Calu3 (cell line): ENCODE measurements at regions of chr4 and their contacts with region 1.

Region 1: DNA sequence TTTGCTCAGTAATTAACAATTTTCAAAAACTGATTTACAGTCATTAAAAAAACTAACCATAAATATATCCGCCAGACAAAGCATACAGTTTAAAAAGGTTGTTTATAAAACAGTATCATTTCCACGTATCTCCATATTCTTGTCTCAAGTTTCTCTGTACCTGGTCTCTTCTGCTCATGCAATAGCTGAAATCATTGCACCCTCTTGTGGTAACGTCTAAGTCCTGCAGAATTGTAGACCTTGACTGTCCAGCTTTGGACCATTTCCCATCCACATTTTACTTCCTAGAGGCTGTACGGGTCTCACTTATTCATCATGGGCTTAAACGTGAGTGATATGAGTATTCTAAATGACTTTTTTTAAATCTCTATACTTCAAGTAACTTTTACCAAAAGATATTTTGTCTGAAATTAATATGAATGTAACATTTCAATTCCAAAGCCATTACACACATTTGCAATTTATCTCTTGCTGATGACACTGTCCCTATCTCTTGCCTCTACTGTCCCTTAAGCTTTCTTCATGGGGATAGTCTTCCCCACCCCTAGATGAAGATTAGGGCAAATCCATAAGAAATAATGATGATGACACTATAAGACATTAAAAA is 118.5 kb downstream of the BTC start:
- DNase-seq: peak; percentile 47
- H3K4me3 Mint-ChIP-seq: no peak overlapping the region
- H3K27ac Mint-ChIP-seq: peak overlapping the region; percentile 29
- H3K4me1 Mint-ChIP-seq: peaks cover 43% of the 10 kb centered on the region
- H3K27me3 Mint-ChIP-seq: no peaks in the 10 kb centered on the region
- CTCF ChIP-seq: peak; percentile 51

Region 2: DNA sequence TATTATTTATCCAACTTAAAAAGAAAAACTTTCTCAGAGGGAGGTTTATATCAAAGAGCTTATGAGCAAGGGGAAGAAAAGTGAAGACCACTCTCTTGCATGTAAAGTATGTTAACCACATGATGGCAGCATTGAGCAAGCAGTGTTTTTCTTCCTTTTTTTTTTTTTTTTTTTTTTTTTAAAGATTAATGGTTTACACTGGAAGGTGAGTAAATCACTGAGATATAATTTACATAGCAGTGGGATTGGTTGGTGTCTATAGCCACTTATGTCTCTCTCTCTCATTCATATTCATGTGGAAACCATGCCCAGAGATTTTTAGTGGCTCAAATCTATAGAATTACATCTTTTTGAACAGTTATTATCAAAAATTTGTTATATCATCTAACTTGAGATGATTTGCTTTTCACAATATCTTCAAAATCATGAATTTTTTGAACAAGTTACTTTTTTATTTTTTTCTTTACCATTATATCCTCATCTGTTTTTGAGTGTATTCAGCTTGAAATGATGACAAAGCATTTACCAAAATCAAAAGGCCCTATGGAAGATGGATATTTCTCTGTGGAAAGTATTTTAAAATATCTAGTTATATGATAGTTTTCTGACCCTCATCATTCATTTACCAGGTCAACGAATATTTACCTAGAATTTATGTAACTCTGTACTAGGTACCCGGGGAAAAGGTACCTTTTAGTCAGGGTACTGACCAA is 486.3 kb before region 1 on chr4:
- CTCF ChIA-PET with region 1: no interaction called
- intact Hi-C with region 1: loop called (anchors 1 kb)
- DNase-seq: no peak
- H3K4me3 Mint-ChIP-seq: no peak overlapping the region
- H3K27ac Mint-ChIP-seq: no peak overlapping the region
- H3K4me1 Mint-ChIP-seq: no peaks in the 10 kb centered on the region
- H3K27me3 Mint-ChIP-seq: no peaks in the 10 kb centered on the region
- CTCF ChIP-seq: peak; percentile 48

Region 3: DNA sequence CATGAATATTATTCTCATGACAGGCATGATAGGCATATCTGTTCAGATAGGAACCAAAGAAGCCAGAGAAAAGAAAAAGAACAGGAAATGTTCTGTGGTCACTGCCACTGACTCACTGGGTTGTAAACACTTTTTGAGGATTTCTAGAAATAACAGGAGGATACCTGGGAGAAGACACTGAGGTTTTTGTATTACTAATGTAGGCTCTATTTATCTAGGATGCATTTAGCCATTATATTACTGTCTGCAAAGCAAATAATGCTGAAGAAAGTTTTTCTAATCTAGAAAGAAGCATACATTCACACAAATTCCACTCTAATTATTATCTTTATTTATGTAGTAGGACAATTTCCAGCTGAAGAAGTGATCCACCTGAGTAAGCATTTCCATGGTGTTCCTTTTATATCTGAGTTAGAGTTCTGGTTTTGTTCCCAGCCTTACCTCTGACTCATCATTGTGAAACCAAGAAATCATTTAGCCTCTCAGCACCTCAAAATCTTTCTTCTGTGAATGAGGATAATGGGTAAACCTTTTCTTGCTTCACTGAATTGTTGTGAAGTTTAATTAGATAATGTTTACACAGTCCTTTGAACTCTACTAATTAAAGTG is 407.7 kb before region 1 on chr4:
- CTCF ChIA-PET with region 1: no interaction called
- intact Hi-C with region 1: no loop called
- DNase-seq: no peak
- H3K4me3 Mint-ChIP-seq: no peak overlapping the region
- H3K27ac Mint-ChIP-seq: no peak overlapping the region
- H3K4me1 Mint-ChIP-seq: no peaks in the 10 kb centered on the region
- H3K27me3 Mint-ChIP-seq: no peaks in the 10 kb centered on the region
- CTCF ChIP-seq: no peak

Region 4: GRCh38 chr4:74376888-74377483 is 298.8 kb before region 1 on chr4:
- CTCF ChIA-PET with region 1: no interaction called
- intact Hi-C with region 1: loop called (anchors 5 kb)
- DNase-seq: no peak
- H3K4me3 Mint-ChIP-seq: peak overlapping the region; percentile 77
- H3K27ac Mint-ChIP-seq: peak overlapping the region; percentile 95
- H3K4me1 Mint-ChIP-seq: peaks cover 10% of the 10 kb centered on the region
- H3K27me3 Mint-ChIP-seq: no peaks in the 10 kb centered on the region
- CTCF ChIP-seq: no peak

Region 5: GRCh38 chr4:74451200-74451661 is 224.5 kb before region 1 on chr4:
- CTCF ChIA-PET with region 1: interaction called, 12 read pairs
- intact Hi-C with region 1: loop called (anchors 2 kb)
- DNase-seq: peak; percentile 44
- H3K4me3 Mint-ChIP-seq: peak overlapping the region; percentile 64
- H3K27ac Mint-ChIP-seq: peak overlapping the region; percentile 74
- H3K4me1 Mint-ChIP-seq: peaks cover 32% of the 10 kb centered on the region
- H3K27me3 Mint-ChIP-seq: no peaks in the 10 kb centered on the region
- CTCF ChIP-seq: no peak

Region 6: DNA sequence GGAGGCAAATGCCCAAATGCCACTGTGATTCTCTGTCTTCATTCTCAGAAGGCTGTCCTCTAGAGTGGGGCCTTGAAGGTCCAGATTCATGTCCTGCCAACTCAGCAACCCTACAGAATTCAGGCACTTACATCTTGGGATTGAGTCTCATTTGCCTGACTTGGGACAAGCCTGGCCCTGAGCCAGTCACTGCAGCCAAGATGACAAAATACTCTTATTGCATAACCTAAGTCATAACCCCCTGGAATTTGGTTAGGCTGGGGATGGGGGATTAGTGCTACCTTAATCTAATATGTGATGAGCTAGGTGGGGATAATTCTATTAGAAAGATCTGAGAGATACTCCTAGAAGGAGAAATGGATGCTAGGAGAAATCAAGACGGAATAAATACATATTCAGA is 130.3 kb before region 1 on chr4:
- CTCF ChIA-PET with region 1: interaction called, 10 read pairs
- intact Hi-C with region 1: no loop called
- DNase-seq: peak; percentile 38
- H3K4me3 Mint-ChIP-seq: no peak overlapping the region
- H3K27ac Mint-ChIP-seq: no peak overlapping the region
- H3K4me1 Mint-ChIP-seq: peaks cover 12% of the 10 kb centered on the region
- H3K27me3 Mint-ChIP-seq: no peaks in the 10 kb centered on the region
- CTCF ChIP-seq: no peak

Region 7: DNA sequence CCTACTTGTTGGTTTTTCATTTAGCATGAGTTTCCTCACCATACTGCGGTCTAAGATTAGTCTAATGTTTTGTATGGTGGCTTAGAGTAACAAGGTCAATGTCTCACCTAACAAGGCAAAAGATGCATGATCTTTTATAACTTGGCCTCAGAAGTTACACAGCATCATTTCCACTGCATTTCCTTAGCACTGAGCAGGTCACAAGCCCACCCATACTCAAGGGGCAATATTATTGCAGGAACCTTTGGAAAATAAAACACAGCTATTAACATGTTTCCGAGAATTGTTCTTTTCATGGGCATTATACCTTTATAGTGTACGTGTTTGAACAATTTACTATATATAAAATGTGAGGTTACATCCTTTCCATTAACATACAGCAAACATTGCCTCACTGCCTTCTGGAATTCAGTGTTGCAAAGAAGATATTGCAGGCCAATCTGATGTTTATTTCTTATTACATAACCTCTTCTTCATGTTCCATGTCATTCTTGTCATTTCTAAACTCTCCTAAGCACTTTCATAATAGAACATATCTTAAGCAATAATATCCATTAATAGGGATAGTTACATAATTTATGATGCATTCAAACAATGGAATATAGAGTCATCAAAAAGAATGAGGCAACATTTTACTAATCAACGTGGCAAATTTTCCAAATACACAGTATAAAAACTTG is 77.0 kb before region 1 on chr4:
- CTCF ChIA-PET with region 1: no interaction called
- intact Hi-C with region 1: no loop called
- DNase-seq: no peak
- H3K4me3 Mint-ChIP-seq: no peak overlapping the region
- H3K27ac Mint-ChIP-seq: no peak overlapping the region
- H3K4me1 Mint-ChIP-seq: no peaks in the 10 kb centered on the region
- H3K27me3 Mint-ChIP-seq: no peaks in the 10 kb centered on the region
- CTCF ChIP-seq: no peak